ENCODE measurements at regions of chr6 and their contacts with region 1.

Region 1: GRCh38 chr6:32974541-32975308 is 6.3 kb downstream of the BRD2 start:
- DNase-seq: no peak
- H3K4me3 ChIP-seq: peak overlapping the region; percentile 59 to 87 (median 76)
- H3K27ac ChIP-seq: peak overlapping the region in 3 of 4 donors; percentile 98 to 100 (median 100)
- H3K4me1 ChIP-seq: peaks cover 33 to 54% (median 50%) of the 10 kb centered on the region in 4 donors
- H3K27me3 ChIP-seq: no peaks in the 10 kb centered on the region
- CTCF ChIP-seq: no peak
- EP300 ChIP-seq: no peak
- POLR2A ChIP-seq: no peak

Region 2: DNA sequence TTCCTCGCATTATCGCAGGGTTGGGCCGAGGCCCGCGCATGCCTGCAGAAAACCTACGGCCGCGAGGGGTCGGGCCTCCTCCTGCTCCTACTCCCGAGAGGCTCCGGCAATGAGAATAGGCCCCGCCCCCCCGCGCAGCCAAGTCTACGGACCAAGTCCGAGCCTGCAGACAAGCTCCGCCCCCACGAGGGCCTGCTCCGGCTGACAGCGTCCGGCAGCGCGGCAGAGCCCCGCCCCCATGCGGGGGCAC is 779.1 kb before region 1 on chr6:
- intact Hi-C with region 1: loop called (anchors 5 kb)
- DNase-seq: peak; percentile 100
- H3K4me3 ChIP-seq: peak overlapping the region; percentile 65 to 95 (median 78)
- H3K27ac ChIP-seq: peak overlapping the region; percentile 94 to 100 (median 96)
- H3K4me1 ChIP-seq: peaks cover 44 to 55% (median 49%) of the 10 kb centered on the region in 4 donors
- H3K27me3 ChIP-seq: peaks cover 0 to 1% (median 0%) of the 10 kb centered on the region in 4 donors
- CTCF ChIP-seq: peak; percentile 17 to 54 (median 53)
- EP300 ChIP-seq: no peak
- POLR2A ChIP-seq: no peak

Region 3: DNA sequence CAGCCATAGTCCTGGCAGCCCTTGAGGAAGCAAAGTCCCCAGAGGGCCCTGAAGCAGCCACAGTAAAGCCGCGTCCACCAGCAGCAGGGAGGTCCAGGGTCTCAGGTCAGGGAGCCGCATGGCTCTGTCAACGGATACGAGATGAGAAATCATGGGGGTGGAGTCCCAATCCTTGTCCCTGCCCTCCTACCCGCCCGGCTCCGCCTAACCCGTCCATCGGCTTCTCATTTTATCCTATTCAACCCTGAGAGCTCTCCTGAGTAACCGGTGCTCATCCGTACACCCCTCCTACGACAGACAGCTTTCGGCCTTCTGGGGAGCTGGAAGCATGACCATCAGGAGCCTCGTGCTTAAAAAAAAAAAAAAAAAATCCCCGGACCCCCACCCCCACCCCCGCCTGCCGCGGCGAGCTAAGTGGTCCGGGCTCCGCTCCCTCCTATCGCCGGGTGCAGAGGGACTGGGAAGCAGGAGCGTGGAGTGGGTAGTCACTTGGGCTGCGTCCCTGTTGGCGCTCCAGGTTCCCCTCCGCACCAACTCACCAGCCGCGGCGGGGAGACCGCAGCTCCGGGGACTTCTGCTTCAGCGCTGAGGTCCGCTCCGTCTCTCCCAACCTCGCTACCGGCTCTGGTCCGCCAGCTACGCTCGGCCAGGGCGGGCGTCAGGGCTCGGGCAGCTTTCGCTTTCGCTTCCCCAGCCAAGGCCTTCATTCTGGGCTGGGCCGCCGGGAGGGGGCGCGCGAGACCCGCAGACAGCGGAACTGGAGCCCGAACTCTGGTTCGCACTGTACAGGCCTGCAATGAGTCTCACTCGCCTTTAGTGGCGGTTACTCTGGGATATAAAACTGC is 136.4 kb before region 1 on chr6 and contains the start of gene TAP2:
- intact Hi-C with region 1: loop called (anchors 5 kb)
- DNase-seq: peak; percentile 98
- H3K4me3 ChIP-seq: peak within 1 kb of the TSS; percentile 63 to 94 (median 82)
- H3K27ac ChIP-seq: peak within 1 kb of the TSS; percentile 86 to 96 (median 92)
- H3K4me1 ChIP-seq: peaks cover 20 to 46% (median 26%) of the 10 kb centered on the region in 4 donors
- H3K27me3 ChIP-seq: no peaks in the 10 kb centered on the region
- CTCF ChIP-seq: peak; percentile 94 to 99 (median 98)
- EP300 ChIP-seq: no peak
- POLR2A ChIP-seq: no peak
- total RNA-seq, gene TAP2: 8.6 to 16.3 (median 13.4) TPM

Region 4: DNA sequence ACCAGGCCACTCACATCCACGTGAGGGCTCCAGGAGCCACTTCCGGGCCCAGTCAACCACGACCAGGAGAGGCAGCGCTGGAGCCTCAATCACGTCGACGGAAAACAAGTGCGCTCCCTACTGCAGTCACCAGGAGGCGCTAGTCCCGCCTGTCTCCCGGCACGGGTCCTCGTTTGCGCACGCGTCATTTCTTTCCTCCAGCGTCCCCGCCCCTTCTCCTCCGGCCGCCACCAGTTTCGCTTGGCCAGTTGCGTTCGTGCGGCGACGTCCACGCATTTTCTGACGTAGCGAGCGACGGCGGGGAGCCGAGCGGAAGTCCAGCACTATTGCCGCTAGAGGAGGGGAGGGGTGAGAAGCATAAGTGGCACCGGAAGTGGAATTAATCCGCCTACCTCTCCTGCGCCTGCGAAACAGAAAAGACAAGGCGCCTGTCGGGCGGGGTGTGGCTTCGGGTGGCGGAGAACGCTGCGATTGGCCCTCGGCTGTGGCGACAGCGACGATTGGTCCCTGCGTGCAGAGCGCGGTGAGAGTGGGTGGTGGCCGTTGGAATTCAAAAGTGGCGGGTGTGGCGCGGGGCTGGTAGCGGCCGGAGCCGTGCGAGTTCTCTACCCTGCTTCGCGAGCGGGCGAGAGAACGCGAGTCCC is 416.7 kb after region 1 on chr6 and contains the start of gene KIFC1:
- intact Hi-C with region 1: no loop called
- DNase-seq: peak; percentile 100
- H3K4me3 ChIP-seq: peak within 1 kb of the TSS; percentile 56 to 69 (median 58)
- H3K27ac ChIP-seq: peak within 1 kb of the TSS; percentile 87 to 92 (median 90)
- H3K4me1 ChIP-seq: peaks cover 8 to 15% (median 14%) of the 10 kb centered on the region in 4 donors
- H3K27me3 ChIP-seq: no peaks in the 10 kb centered on the region
- CTCF ChIP-seq: peak; percentile 97 to 99 (median 98)
- EP300 ChIP-seq: peak; percentile 12
- POLR2A ChIP-seq: no peak
- total RNA-seq, gene KIFC1: 0.39 to 1.1 (median 0.42) TPM in 3 of 4 donors, not detected in the other

Measured in esophagus muscularis mucosa (tissue), 4 donors.